Naive thymus-derived CD4-positive, alpha-beta T cell (primary cell): ENCODE measurements at regions of chr17 and their contacts with region 1.

Region 1: DNA sequence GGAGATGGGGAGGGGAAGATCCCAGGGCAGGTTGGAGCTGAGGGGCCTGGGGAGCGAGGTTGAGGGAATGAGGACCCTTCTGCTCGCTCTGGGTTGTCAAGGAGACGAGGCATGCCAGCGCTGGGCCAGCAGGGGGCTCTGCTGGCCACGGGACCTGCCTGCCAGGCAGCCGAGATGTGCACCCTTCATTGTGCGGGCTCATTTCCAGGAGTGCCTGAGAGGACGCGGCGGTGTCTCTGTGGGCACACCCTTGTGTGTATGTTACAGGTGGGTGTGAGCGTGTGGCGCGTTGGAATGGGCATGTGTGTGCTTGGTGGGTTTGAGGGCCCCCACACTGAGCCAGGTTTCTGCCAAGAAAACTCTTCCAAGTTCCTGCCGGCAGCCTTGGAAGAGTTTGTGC is 15.9 kb downstream of the ARHGAP23 start:
- DNase-seq: peak in 8 of 9 donors; percentile 21 to 60 (median 53)
- ATAC-seq: peak; percentile 77
- H3K4me3 ChIP-seq: no peak overlapping the region
- H3K4me3 Mint-ChIP-seq: peak overlapping the region in 5 of 10 donors; percentile 18 to 61 (median 48)
- H3K27ac ChIP-seq: no peak overlapping the region
- H3K27ac Mint-ChIP-seq: peak overlapping the region in 1 of 9 donors; percentile 10
- H3K4me1 ChIP-seq: peaks cover 0 to 8% of the 10 kb centered on the region in 2 donors
- H3K4me1 Mint-ChIP-seq: peaks cover 0 to 15% (median 11%) of the 10 kb centered on the region in 7 donors
- H3K27me3 ChIP-seq: no peaks in the 10 kb centered on the region
- H3K27me3 Mint-ChIP-seq: peaks cover 0 to 9% (median 2%) of the 10 kb centered on the region in 5 donors

Region 2: GRCh38 chr17:38485146-38485468 is 41.0 kb after region 1 on chr17:
- CTCF ChIA-PET with region 1: no interaction called
- POLR2A ChIA-PET with region 1: no interaction called
- intact Hi-C with region 1: loop called (anchors 1 kb)
- DNase-seq: no peak
- ATAC-seq: no peak
- H3K4me3 ChIP-seq: no peak overlapping the region
- H3K4me3 Mint-ChIP-seq: no peak overlapping the region
- H3K27ac ChIP-seq: no peak overlapping the region
- H3K27ac Mint-ChIP-seq: no peak overlapping the region
- H3K4me1 ChIP-seq: no peaks in the 10 kb centered on the region
- H3K4me1 Mint-ChIP-seq: peaks cover 0 to 7% (median 5%) of the 10 kb centered on the region in 7 donors
- H3K27me3 ChIP-seq: no peaks in the 10 kb centered on the region
- H3K27me3 Mint-ChIP-seq: peaks cover 0 to 9% (median 0%) of the 10 kb centered on the region in 5 donors

Region 3: GRCh38 chr17:38498186-38498752 is 54.1 kb after region 1 on chr17:
- CTCF ChIA-PET with region 1: no interaction called
- POLR2A ChIA-PET with region 1: no interaction called
- intact Hi-C with region 1: loop called in 1 of 2 experiments (anchors 2 kb)
- DNase-seq: no peak
- ATAC-seq: no peak
- H3K4me3 ChIP-seq: no peak overlapping the region
- H3K4me3 Mint-ChIP-seq: no peak overlapping the region
- H3K27ac ChIP-seq: no peak overlapping the region
- H3K27ac Mint-ChIP-seq: no peak overlapping the region
- H3K4me1 ChIP-seq: no peaks in the 10 kb centered on the region
- H3K4me1 Mint-ChIP-seq: peaks cover 0 to 1% (median 0%) of the 10 kb centered on the region in 7 donors
- H3K27me3 ChIP-seq: no peaks in the 10 kb centered on the region
- H3K27me3 Mint-ChIP-seq: peaks cover 0 to 7% (median 3%) of the 10 kb centered on the region in 5 donors

Region 4: GRCh38 chr17:38667099-38667786 is 223.1 kb after region 1 on chr17:
- CTCF ChIA-PET with region 1: interaction called, 3 read pairs
- POLR2A ChIA-PET with region 1: no interaction called
- intact Hi-C with region 1: loop called in 1 of 2 experiments (anchors 1 kb)
- DNase-seq: peak in 7 of 9 donors; percentile 16 to 66 (median 44)
- ATAC-seq: peak; percentile 80
- H3K4me3 ChIP-seq: no peak overlapping the region
- H3K4me3 Mint-ChIP-seq: no peak overlapping the region
- H3K27ac ChIP-seq: no peak overlapping the region
- H3K27ac Mint-ChIP-seq: no peak overlapping the region
- H3K4me1 ChIP-seq: no peaks in the 10 kb centered on the region
- H3K4me1 Mint-ChIP-seq: peaks cover 0 to 13% (median 8%) of the 10 kb centered on the region in 7 donors
- H3K27me3 ChIP-seq: peaks cover 0 to 6% of the 10 kb centered on the region in 2 donors
- H3K27me3 Mint-ChIP-seq: peaks cover 44 to 66% (median 56%) of the 10 kb centered on the region in 5 donors